ENCODE measurements at regions of chr5 and their contacts with region 1.

Region 1: GRCh38 chr5:151659001-151659754 is 27.5 kb downstream of the SPARC start:
- DNase-seq: peak; percentile 81
- H3K4me3 ChIP-seq: no peak overlapping the region
- H3K27ac ChIP-seq: peak overlapping the region; percentile 99
- H3K4me1 ChIP-seq: peaks cover 49% of the 10 kb centered on the region
- H3K27me3 ChIP-seq: no peaks in the 10 kb centered on the region

Region 2: DNA sequence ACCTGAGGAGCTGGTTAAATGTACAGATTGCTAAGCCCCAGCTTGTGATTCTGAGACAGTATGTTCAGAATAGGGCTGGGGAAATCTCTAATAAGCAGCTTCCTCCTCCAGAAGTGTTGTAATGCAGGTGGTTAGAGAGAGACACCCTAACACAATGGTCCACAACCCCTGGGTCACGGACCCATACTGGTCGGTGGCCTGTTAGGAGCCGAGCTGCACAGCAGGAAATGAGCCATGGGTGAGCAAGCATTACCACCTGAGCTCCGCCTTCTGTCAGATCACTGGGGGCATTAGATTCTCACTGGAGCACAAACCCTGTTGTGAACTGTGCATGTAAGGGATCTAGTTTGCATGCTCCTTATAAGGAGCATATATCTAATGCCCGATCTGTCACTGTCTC is 149.9 kb before region 1 on chr5:
- in situ Hi-C with region 1: loop called (anchors 10 kb)
- DNase-seq: no peak
- H3K4me3 ChIP-seq: no peak overlapping the region
- H3K27ac ChIP-seq: no peak overlapping the region
- H3K4me1 ChIP-seq: no peaks in the 10 kb centered on the region
- H3K27me3 ChIP-seq: no peaks in the 10 kb centered on the region

Region 3: GRCh38 chr5:151740336-151740942 is 81.3 kb after region 1 on chr5:
- in situ Hi-C with region 1: loop called (anchors 5 kb)
- DNase-seq: peak; percentile 98
- H3K4me3 ChIP-seq: peak overlapping the region; percentile 64
- H3K27ac ChIP-seq: peak overlapping the region; percentile 99
- H3K4me1 ChIP-seq: peaks cover 76% of the 10 kb centered on the region
- H3K27me3 ChIP-seq: no peaks in the 10 kb centered on the region

Region 4: DNA sequence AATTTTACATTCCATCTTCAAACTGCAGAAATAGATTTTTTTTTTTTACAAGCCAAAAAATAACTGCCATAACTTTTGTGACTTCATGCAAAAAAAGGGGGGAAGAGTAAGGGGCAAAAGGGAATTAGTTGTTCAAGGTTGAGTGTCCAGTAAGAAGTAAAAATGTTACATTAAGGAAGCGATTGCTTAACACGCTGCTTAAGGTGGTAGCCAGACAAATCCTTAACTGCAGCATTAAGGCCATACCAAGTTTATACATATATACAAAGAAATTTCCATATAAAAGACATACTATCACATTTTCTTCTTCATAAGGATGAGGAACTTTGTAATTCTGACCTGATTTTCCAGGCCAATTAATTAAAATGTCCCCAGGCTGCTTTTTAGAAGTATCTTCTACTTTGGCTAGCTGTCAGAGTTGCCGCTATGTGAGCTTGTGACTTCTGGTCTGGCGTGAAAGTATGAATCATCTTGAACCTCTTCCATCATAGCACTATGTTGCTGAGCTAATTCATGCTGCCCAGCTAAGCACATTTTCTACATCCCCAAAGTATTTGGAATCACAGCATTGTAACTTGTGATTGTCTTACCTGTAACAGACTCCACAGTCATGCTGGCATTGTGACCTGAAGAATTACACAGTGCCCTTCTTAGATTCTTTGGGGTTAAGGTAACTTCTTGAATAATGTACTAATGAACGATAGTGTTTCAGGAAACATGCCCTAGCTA is 152.6 kb after region 1 on chr5:
- in situ Hi-C with region 1: no loop called
- DNase-seq: peak; percentile 84
- H3K4me3 ChIP-seq: no peak overlapping the region
- H3K27ac ChIP-seq: peak overlapping the region; percentile 37
- H3K4me1 ChIP-seq: peaks cover 36% of the 10 kb centered on the region
- H3K27me3 ChIP-seq: no peaks in the 10 kb centered on the region

Region 5: GRCh38 chr5:152072091-152072490 is 412.9 kb after region 1 on chr5:
- in situ Hi-C with region 1: no loop called
- DNase-seq: no peak
- H3K4me3 ChIP-seq: no peak overlapping the region
- H3K27ac ChIP-seq: no peak overlapping the region
- H3K4me1 ChIP-seq: no peaks in the 10 kb centered on the region
- H3K27me3 ChIP-seq: no peaks in the 10 kb centered on the region

Region 6: GRCh38 chr5:152701305-152701949 is 1042.2 kb after region 1 on chr5:
- in situ Hi-C with region 1: no loop called
- DNase-seq: no peak
- H3K4me3 ChIP-seq: no peak overlapping the region
- H3K27ac ChIP-seq: no peak overlapping the region
- H3K4me1 ChIP-seq: no peaks in the 10 kb centered on the region
- H3K27me3 ChIP-seq: no peaks in the 10 kb centered on the region